Activated B cell treated with CpG ODN at 0.5 μM for 24 hours (primary cell): ENCODE measurements at regions of chr1 and their contacts with region 1.

Region 1: DNA sequence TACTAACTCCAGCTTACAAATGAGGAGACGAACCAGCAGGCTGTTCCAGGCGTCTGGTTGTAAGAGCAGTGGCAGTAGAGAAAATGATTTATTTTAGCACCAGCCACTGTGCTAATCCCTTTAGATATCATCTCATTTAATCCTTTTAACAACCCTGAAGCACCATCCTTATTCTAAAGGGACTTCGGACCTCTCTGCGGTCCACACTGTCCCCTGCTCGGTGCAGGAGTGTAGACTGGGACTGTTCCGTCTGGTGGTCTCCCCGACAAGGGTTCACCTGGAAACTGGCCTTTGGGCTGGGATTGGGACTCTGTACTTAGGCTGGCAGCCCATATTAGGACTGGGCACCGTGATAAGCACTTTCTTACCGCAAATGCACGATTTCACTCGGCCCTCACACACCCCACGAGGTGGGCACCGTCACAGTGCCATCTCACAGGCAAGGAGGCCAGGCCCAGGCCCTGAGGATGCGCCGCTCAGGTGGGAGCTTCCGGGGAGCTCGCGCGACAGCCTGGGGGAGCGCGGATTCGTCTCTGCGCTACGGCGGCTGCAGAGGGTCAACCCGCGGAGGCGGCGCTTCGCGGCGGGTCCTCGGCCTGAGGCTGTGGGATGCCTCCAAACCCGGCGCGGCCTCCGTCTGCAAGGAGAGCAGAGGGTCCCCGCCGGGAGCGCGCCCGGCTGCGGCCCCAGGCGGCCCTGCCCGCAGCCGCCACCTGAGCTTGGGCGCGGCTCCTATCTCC is 45.2 kb downstream of the ATP1A1 start:
- DNase-seq: peak; percentile 85
- ATAC-seq: peak; percentile 96
- H3K4me3 Mint-ChIP-seq: peak overlapping the region; percentile 91
- H3K27ac Mint-ChIP-seq: peak overlapping the region; percentile 87
- H3K4me1 Mint-ChIP-seq: peaks cover 26% of the 10 kb centered on the region
- H3K27me3 Mint-ChIP-seq: peaks cover 6% of the 10 kb centered on the region
- CTCF ChIP-seq: no peak

Region 2: GRCh38 chr1:116628448-116628847 is 210.2 kb after region 1 on chr1:
- CTCF ChIA-PET with region 1: no interaction called
- POLR2A ChIA-PET with region 1: no interaction called
- intact Hi-C with region 1: no loop called
- DNase-seq: no peak
- ATAC-seq: no peak
- H3K4me3 Mint-ChIP-seq: peak overlapping the region; percentile 60
- H3K27ac Mint-ChIP-seq: peak overlapping the region; percentile 86
- H3K4me1 Mint-ChIP-seq: peaks cover 27% of the 10 kb centered on the region
- H3K27me3 Mint-ChIP-seq: no peaks in the 10 kb centered on the region
- CTCF ChIP-seq: no peak

Region 3: GRCh38 chr1:117121776-117122697 is 703.8 kb after region 1 on chr1:
- CTCF ChIA-PET with region 1: no interaction called
- POLR2A ChIA-PET with region 1: no interaction called
- intact Hi-C with region 1: loop called (anchors 5 kb)
- DNase-seq: peak; percentile 76
- ATAC-seq: peak; percentile 88
- H3K4me3 Mint-ChIP-seq: peak overlapping the region; percentile 88
- H3K27ac Mint-ChIP-seq: peak overlapping the region; percentile 54
- H3K4me1 Mint-ChIP-seq: peaks cover 13% of the 10 kb centered on the region
- H3K27me3 Mint-ChIP-seq: peaks cover 2% of the 10 kb centered on the region
- CTCF ChIP-seq: no peak